PC-9 (cell line): ENCODE measurements at regions of chr15 and their contacts with region 1.

Region 1: GRCh38 chr15:63372018-63372705 is 9.5 kb downstream of the CA12 start:
- DNase-seq: peak; percentile 60 to 65
- H3K4me3 ChIP-seq: no peak overlapping the region
- H3K27ac ChIP-seq: no peak overlapping the region
- H3K4me1 ChIP-seq: peaks cover 47% of the 10 kb centered on the region
- H3K27me3 ChIP-seq: no peaks in the 10 kb centered on the region
- CTCF ChIP-seq: no peak

Region 2: GRCh38 chr15:62977952-62978811 is 394.0 kb before region 1 on chr15:
- CTCF ChIA-PET with region 1: no interaction called
- POLR2A ChIA-PET with region 1: interaction called, 36 read pairs
- intact Hi-C with region 1: no loop called
- DNase-seq: no peak
- H3K4me3 ChIP-seq: no peak overlapping the region
- H3K27ac ChIP-seq: no peak overlapping the region
- H3K4me1 ChIP-seq: no peaks in the 10 kb centered on the region
- H3K27me3 ChIP-seq: no peaks in the 10 kb centered on the region
- CTCF ChIP-seq: no peak

Region 3: DNA sequence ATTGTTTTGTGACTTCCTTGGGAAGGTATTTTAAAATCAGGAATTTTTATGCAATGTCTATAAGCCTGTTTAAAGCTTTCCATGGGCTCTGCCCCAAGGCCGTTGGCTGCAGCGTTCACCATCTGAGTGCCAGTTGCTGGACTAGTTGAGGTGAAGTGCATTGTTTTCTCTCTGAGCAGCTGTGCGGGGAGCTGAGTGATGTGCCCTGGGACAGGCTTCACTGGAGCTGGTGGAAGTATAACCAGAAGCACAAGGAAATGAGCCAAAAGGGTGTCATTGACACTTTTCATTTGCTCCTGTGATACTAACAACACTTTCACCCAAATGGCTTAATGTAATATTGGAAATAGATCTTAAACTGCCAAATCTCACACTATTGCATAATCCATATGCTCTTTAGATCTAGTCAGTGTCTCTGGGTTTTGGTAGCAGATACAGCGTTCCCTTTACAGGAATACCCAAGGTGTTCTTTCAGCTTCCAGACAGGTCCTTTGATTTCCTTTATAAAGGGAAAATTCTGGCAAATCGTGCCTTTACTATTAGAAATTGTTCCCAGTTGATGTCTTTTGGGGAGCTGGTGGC is 65.6 kb before region 1 on chr15:
- CTCF ChIA-PET with region 1: no interaction called
- POLR2A ChIA-PET with region 1: no interaction called
- intact Hi-C with region 1: no loop called
- DNase-seq: no peak
- H3K4me3 ChIP-seq: no peak overlapping the region
- H3K27ac ChIP-seq: no peak overlapping the region
- H3K4me1 ChIP-seq: no peaks in the 10 kb centered on the region
- H3K27me3 ChIP-seq: no peaks in the 10 kb centered on the region
- CTCF ChIP-seq: no peak

Region 4: DNA sequence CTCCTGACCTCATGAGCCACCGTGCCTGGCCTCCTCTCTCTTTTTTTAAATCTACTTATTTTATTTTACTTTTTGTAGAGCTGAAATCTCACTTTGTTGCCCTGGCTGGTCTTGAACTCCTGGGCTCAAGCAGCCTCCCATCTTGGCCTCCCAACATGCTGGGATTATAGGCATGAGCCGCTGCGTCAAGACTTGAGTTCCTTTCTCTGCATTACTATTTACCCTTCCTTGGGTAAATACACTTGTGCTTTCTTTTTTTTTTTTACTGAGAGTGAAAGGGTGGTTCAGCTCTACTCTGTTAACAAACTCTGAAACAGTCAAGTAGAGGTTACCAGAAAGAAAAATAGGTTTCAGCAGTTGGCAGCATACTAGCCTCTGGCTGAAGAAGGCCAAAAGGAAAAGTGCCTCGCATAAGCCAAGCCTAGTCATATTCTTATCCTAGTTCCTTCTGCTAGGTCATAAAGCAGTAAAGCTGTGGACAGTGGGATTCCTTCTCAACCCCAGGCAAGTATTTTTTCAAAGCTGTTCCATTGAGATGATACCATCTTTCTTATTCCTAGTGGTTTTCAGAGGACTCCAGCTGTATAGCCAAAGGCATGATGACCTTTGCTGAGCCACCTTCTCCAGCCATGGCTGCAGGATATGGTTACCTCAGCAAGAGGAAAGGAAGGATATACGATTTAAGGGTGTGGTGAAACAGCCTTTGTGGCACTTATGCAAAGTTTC is 1268.1 kb after region 1 on chr15:
- CTCF ChIA-PET with region 1: no interaction called
- POLR2A ChIA-PET with region 1: interaction called, 13 read pairs
- intact Hi-C with region 1: no loop called
- DNase-seq: no peak
- H3K4me3 ChIP-seq: no peak overlapping the region
- H3K27ac ChIP-seq: no peak overlapping the region
- H3K4me1 ChIP-seq: no peaks in the 10 kb centered on the region
- H3K27me3 ChIP-seq: no peaks in the 10 kb centered on the region
- CTCF ChIP-seq: no peak